Activated naive CD4-positive, alpha-beta T cell treated with anti-CD3 and anti-CD28 coated beads for 36 hours (primary cell): ENCODE measurements at regions of chrX and their contacts with region 1.

Region 1: GRCh38 chrX:54639346-54640102 is 109.5 kb downstream of the GNL3L start:
- DNase-seq: peak; percentile 97
- H3K4me3 Mint-ChIP-seq: peak overlapping the region; percentile 84
- H3K27ac Mint-ChIP-seq: peak overlapping the region; percentile 99
- H3K4me1 Mint-ChIP-seq: peaks cover 5% of the 10 kb centered on the region
- H3K27me3 Mint-ChIP-seq: no peaks in the 10 kb centered on the region

Region 2: GRCh38 chrX:53714580-53715345 is 924.8 kb before region 1 on chrX:
- CTCF ChIA-PET with region 1: no interaction called
- intact Hi-C with region 1: loop called (anchors 10 kb)
- DNase-seq: peak; percentile 77
- H3K4me3 Mint-ChIP-seq: peak overlapping the region; percentile 85
- H3K27ac Mint-ChIP-seq: peak overlapping the region; percentile 94
- H3K4me1 Mint-ChIP-seq: peaks cover 34% of the 10 kb centered on the region
- H3K27me3 Mint-ChIP-seq: no peaks in the 10 kb centered on the region

Region 3: GRCh38 chrX:54439967-54440871 is 199.3 kb before region 1 on chrX and contains the start of gene TSR2:
- CTCF ChIA-PET with region 1: no interaction called
- intact Hi-C with region 1: loop called (anchors 1 kb)
- DNase-seq: peak; percentile 86
- H3K4me3 Mint-ChIP-seq: peak within 1 kb of the TSS; percentile 89
- H3K27ac Mint-ChIP-seq: peak within 1 kb of the TSS; percentile 69
- H3K4me1 Mint-ChIP-seq: peaks cover 24% of the 10 kb centered on the region
- H3K27me3 Mint-ChIP-seq: no peaks in the 10 kb centered on the region
- total RNA-seq, gene TSR2: 24.4 to 26.1 TPM

Region 4: GRCh38 chrX:54808605-54809483 is 169.3 kb after region 1 on chrX:
- CTCF ChIA-PET with region 1: interaction called, 3 read pairs
- intact Hi-C with region 1: loop called (anchors 1 kb)
- DNase-seq: peak; percentile 92
- H3K4me3 Mint-ChIP-seq: peak overlapping the region; percentile 88
- H3K27ac Mint-ChIP-seq: peak overlapping the region; percentile 88
- H3K4me1 Mint-ChIP-seq: peaks cover 15% of the 10 kb centered on the region
- H3K27me3 Mint-ChIP-seq: no peaks in the 10 kb centered on the region

Region 5: GRCh38 chrX:55057675-55058249 is 418.2 kb after region 1 on chrX:
- CTCF ChIA-PET with region 1: interaction called, 4 read pairs
- intact Hi-C with region 1: loop called (anchors 1 kb)
- DNase-seq: peak; percentile 35
- H3K4me3 Mint-ChIP-seq: peak overlapping the region; percentile 39
- H3K27ac Mint-ChIP-seq: no peak overlapping the region
- H3K4me1 Mint-ChIP-seq: peaks cover 18% of the 10 kb centered on the region
- H3K27me3 Mint-ChIP-seq: no peaks in the 10 kb centered on the region